Activated naive CD4-positive, alpha-beta T cell treated with anti-CD3 and anti-CD28 coated beads, Interleukin-2, amount 10 ng/mL, durations not matched to agents 7 days and 5 days (primary cell): ENCODE measurements at regions of chr11 and their contacts with region 1.

Region 1: GRCh38 chr11:64304316-64305072 is 830 bp upstream of the ESRRA start:
- DNase-seq: peak; percentile 97
- H3K4me3 Mint-ChIP-seq: peak overlapping the region; percentile 78
- H3K27ac Mint-ChIP-seq: peak overlapping the region; percentile 98
- H3K4me1 Mint-ChIP-seq: peaks cover 50% of the 10 kb centered on the region
- H3K27me3 Mint-ChIP-seq: peaks cover 30% of the 10 kb centered on the region

Region 2: DNA sequence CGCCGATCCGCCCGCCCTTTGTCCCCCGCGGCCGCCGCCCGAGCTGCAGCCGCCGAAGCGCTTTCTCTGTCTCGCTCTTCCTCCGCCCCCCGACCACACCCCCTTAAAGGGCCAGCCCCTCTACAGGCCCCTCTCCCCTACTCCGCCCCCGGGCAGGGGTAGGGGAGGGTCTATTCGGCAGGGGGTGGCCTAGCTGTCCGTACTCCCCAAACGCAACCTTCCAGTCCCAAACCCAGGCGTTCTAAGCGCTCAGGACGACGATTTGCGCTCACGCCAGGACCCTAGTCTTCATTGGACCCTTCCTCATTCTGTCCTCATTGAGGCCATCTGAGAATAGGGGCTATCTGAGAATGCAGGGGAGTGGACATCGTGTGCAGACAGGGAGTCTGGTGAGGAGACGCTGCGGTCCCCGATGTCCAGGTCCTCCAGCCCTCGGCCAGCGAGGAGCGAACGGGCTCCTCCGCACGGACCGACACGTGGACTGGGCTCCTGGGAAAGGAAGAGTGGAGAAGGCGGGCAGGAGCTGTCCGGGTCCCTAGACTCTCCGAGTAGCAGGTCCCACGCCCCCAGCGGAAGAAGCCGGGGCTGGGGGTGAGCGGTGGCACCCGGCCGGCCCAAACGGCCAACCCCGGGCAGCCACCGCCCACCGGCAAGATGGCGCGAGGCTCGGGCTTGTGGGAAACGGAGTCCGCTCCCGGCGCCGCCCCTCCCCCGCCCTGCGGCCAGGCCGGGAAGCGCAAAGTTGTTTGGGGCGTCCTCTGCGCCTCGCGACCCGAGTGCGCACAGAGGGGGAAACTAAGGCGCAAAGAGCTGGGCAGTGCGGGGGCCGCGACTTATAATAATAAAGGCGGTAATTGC is 57.4 kb before region 1 on chr11 and contains the start of gene PPP1R14B:
- CTCF ChIA-PET with region 1: interaction called, 19 read pairs
- DNase-seq: peak; percentile 89
- H3K4me3 Mint-ChIP-seq: peak within 1 kb of the TSS; percentile 92
- H3K27ac Mint-ChIP-seq: peak within 1 kb of the TSS; percentile 87
- H3K4me1 Mint-ChIP-seq: peaks cover 56% of the 10 kb centered on the region
- H3K27me3 Mint-ChIP-seq: peaks cover 15% of the 10 kb centered on the region

Region 3: GRCh38 chr11:64284048-64284961 is 20.2 kb before region 1 on chr11 and contains the start of gene BAD:
- CTCF ChIA-PET with region 1: interaction called, 50 read pairs
- DNase-seq: peak; percentile 96
- H3K4me3 Mint-ChIP-seq: peak within 1 kb of the TSS; percentile 83
- H3K27ac Mint-ChIP-seq: peak within 1 kb of the TSS; percentile 89
- H3K4me1 Mint-ChIP-seq: peaks cover 29% of the 10 kb centered on the region
- H3K27me3 Mint-ChIP-seq: peaks cover 10% of the 10 kb centered on the region

Region 4: DNA sequence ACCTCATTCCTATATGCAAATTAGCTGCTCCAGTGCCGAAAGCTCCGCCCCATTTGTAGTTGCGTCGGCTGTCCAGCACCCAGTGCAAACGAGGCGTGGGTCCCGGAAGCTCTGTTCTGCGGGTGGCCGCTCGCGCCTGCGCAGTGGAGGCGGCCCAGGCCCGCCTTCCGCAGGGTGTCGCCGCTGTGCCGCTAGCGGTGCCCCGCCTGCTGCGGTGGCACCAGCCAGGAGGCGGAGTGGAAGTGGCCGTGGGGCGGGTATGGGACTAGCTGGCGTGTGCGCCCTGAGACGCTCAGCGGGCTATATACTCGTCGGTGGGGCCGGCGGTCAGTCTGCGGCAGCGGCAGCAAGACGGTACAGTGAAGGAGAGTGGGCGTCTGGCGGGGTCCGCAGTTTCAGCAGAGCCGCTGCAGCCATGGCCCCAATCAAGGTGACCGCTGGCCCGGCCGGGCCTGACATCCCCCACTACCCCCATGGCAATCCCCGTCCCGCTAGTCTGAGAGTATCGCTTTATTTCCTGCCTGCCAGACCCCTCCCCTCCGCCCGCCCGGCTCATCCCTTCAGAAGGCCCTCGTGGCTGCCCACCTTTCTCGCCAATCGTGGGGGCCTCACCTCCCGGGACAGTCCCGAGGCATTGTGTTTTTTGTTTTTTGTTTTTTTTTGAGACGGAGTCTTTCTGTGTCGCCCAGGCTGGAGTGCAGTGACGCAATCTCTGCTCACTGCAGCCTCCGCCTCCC is 13.6 kb after region 1 on chr11 and contains the start of gene PRDX5:
- CTCF ChIA-PET with region 1: interaction called, 17 read pairs
- DNase-seq: peak; percentile 97
- H3K4me3 Mint-ChIP-seq: peak within 1 kb of the TSS; percentile 97
- H3K27ac Mint-ChIP-seq: peak within 1 kb of the TSS; percentile 100
- H3K4me1 Mint-ChIP-seq: peaks cover 55% of the 10 kb centered on the region
- H3K27me3 Mint-ChIP-seq: no peaks in the 10 kb centered on the region

Region 5: DNA sequence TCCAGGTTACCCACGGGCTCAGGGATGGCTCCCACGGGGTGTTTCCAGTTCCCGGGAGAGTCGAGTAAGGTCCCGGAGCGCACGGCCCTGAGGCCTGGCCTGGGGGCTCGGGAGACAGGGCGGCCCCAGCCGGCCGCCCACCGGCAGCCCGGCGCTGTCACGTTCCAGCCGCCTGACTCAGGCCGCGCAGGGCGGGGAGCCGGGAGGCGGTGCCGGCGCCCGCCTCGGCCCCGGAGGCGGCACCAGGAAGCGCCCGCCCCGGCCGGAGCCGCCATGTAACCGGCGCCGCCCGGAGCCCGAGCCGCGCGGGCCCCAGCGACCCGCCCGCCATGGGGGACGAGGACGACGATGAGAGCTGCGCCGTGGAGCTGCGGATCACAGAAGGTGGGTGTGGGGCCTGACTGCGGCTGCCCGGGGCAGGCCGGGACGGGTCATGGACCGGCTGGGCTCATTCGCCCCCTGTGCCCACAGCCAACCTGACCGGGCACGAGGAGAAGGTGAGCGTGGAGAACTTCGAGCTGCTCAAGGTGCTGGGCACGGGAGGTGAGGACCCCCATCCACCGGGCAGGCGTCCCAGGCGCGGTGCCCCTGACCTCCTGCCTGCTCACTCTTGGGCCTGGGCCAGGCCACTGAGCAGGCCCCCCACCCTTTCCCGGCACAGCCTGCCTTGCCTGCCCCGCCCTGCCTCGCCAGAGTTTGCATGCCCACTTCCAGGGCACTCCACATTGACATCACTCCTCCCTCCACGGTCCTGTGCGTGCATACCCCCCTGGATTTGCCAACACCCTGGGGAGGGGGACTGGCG is 54.6 kb after region 1 on chr11 and contains the start of gene RPS6KA4:
- CTCF ChIA-PET with region 1: interaction called, 22 read pairs
- DNase-seq: peak; percentile 68
- H3K4me3 Mint-ChIP-seq: peak within 1 kb of the TSS; percentile 89
- H3K27ac Mint-ChIP-seq: peak within 1 kb of the TSS; percentile 85
- H3K4me1 Mint-ChIP-seq: peaks cover 39% of the 10 kb centered on the region
- H3K27me3 Mint-ChIP-seq: no peaks in the 10 kb centered on the region